Pancreas (tissue), 10 donors: ENCODE measurements at regions of chr19 and their contacts with region 1.

Region 1: DNA sequence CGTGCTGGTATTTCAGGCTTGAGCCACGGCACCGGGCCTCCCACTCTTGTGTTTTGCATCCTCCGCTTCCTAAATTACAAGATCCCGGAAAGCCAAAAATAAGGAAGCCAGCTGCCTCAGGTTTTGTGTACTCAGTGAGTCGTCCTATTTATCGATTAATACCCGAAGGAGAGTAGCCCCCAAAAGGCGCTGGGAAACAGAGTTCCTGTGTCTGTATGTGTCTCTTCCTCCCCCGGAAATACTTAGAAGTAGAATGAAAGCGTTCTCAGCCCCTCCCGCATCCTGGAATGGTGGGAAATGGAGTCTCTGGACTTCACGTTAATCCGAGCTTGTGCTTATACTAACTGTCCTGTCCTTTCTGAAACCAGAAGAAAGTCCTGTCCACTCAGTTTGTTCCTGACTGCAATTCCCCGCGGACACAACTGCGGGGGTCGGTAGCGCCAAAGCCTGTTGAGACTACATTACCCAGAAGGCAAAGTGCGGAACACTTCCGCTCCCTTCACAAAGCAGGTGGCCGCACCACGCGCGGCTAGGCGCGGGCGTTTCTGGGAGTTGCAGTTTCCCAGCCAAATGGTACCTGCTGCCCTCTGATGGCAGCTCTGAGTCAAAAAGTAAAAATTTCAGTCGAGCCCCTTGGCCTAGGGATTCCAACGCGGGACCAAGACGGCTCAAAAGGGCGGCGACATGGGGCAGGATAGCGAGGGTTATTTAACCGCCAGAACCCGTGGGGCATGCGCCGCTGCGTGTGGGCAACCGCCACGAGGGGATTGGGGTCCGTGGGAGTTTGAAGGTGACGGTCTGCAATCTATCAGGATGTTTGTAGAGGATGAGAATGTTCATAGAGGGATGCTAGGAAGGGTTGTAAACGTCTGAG is 2.2 kb upstream of the GSK3A start:
- DNase-seq: peak; percentile 89 to 95 (median 91)
- ATAC-seq: peak; percentile 42 to 69 (median 60)
- H3K4me3 ChIP-seq: peak overlapping the region; percentile 26 to 91 (median 57)
- H3K27ac ChIP-seq: peak overlapping the region; percentile 67 to 92 (median 83)
- H3K4me1 ChIP-seq: peaks cover 0 to 16% (median 7%) of the 10 kb centered on the region in 3 donors
- H3K27me3 ChIP-seq: no peaks in the 10 kb centered on the region
- CTCF ChIP-seq: peak in 3 of 4 donors; percentile 14 to 34 (median 31)

Region 2: DNA sequence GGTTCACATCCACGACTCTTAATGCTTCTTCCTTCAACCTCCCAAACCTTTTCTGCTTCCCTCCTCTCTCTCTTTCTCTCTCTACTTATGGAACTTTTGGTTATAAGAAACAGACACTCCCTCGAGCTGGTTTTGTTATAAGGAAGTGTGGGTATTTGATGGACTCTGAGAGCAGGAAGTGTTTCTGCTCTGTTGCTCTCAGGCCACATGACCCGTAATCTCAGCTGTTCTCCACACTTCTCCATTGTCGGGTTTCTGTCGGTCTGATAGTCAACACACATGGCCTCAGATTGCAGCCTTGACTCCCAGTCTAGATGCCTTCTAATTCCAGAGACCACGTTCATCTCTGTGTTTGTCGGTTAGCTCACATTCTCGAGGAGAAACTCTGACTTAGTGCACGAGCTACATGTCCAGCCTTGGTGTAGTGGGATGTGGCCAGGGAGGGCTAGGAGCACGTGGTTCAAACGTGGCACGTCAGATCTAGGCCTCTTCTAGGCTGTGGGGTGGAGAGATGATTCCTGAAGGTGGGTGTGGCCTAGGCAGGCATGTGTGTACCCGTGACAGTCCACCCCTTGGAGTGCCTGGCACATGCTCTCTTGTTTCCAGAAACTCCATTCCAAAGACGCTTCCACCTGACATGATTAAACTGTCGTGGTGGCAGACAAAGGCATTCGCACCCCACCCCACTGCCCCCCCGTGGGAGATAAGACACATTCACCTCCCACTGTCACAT is 119.2 kb after region 1 on chr19:
- intact Hi-C with region 1: no loop called
- DNase-seq: no peak
- ATAC-seq: peak in 2 of 4 donors; percentile 39 to 66
- H3K4me3 ChIP-seq: no peak overlapping the region
- H3K27ac ChIP-seq: no peak overlapping the region
- H3K4me1 ChIP-seq: no peaks in the 10 kb centered on the region
- H3K27me3 ChIP-seq: no peaks in the 10 kb centered on the region
- CTCF ChIP-seq: no peak

Region 3: GRCh38 chr19:42433503-42434260 is 189.1 kb after region 1 on chr19:
- intact Hi-C with region 1: loop called in 1 of 3 experiments (anchors 10 kb)
- DNase-seq: peak; percentile 82 to 91 (median 88)
- ATAC-seq: peak; percentile 87 to 95 (median 94)
- H3K4me3 ChIP-seq: no peak overlapping the region
- H3K27ac ChIP-seq: peak overlapping the region; percentile 6 to 67 (median 44)
- H3K4me1 ChIP-seq: peaks cover 0 to 8% (median 5%) of the 10 kb centered on the region in 3 donors
- H3K27me3 ChIP-seq: no peaks in the 10 kb centered on the region
- CTCF ChIP-seq: peak; percentile 62 to 76 (median 71)